Posterior cingulate gyrus (tissue), 11 donors: ENCODE measurements at regions of chr11 and their contacts with region 1.

Region 1: DNA sequence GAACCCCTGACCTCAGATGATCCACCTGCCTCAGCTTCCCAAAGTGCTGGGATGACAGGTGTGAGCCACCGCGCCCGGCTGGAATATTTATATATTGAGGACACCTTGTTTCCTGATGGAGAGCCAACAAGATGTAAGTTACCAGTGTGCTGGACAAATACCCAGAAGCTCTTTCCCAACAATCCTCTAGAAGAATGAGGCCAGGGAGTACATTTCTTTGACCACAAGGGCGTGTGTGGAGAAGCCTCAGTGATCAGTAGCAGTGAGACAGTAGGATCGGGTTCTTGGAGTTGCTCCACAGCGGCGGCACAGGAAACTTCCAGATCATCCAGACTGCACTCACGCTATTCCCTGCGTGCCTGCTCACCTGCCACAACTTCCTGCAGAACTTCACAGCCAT is 10.3 kb upstream of the POLA2 start:
- DNase-seq: no peak

Region 2: GRCh38 chr11:65150509-65151271 is 100.8 kb before region 1 on chr11:
- intact Hi-C with region 1: no loop called
- DNase-seq: peak in 9 of 10 donors; percentile 36 to 92 (median 60)

Region 3: GRCh38 chr11:65204646-65205601 is 46.6 kb before region 1 on chr11:
- intact Hi-C with region 1: loop called (anchors 10 kb)
- DNase-seq: peak in 6 of 10 donors; percentile 30 to 87 (median 59)

Region 4: DNA sequence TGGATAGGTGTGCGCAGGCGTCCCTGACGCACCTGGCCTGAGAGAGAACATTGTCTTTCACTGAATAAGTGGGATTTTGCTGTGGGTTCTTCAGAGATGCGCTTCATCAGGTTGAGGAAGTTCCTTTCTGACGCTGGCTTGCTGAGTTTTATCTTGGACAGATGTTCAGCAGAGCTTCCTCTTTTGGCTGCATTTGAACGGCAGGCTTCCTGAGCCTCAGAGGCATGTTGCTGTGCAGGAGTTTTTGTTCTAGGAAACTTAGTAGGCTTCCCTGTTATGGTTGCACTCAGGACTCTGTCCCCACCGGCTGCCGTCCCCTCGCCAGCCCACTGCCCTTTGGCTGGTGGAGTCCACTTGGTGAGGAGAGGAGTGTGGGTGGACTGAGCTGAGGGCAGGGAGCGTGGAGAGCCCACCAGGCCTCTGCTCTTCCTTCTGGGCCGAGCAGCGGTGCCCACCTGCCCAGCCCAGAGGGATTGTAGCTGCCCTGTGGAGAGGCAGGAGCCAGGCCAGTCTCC is 152.2 kb after region 1 on chr11:
- intact Hi-C with region 1: no loop called
- DNase-seq: no peak